ENCODE measurements at regions of chr10 and their contacts with region 1.

Region 1: DNA sequence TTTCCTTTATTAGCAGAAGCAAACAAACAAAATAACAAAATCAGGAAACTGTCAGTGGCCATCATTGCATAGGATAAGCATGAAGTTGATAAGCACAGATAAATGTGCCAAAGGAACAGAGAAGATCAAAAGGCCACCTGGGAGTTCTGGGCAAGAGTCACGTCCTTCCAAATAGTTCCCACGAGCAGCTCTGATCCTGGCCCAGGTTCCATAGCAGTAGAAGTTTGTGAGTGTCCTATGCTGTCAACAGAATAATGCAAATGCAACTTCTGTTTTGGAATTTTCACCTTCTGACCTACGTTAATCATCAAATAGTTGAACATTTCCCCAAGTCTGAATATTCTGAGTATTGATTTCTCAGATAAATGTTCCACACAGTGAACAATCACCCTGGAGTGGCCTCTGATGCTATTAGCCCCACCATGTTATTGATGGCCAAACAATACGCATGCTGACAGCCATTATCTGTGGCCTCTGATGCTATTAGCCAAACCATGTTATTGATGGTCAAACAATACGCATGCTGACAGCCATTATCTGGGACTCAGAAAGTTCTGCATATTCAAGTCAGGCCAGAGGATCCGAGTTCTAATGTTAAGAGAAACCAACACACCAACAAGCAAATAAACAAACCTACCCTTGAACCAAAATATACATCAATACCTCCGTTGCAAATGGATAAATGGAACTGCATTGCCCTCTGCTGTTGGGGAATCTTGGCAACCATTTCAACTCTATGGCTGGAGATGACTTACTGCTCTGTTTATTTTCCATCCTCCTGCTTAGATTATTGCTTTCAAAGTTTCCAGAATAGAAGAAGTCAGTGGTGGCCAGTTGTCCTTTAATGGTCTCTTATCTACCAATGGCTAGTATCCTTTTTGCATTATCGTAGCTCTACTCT is 63.3 kb downstream of the MRC1 start:
- DNase-seq: peak; percentile 57

Region 2: DNA sequence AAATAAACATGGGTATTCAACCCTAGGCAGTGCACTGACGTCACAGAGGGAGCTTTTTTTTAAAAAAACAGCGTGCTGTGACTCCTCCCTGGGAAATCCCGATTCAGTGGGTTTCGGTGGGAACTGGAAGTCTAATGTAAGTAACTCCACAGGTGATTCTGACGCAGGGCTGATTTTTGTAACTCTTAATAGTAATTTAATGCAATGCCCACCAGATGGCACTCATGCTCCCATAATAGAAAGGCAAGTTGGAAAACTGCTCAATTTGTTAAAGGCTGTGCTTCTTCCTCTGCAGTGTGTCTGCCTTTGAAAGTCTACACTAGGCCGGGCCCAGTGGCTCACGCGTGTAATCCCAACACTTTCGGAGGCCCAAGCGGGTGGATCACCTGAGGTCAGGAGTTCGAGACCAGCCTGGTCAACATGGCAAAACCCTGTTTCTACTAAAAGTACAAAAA is 1044.3 kb before region 1 on chr10:
- in situ Hi-C with region 1: loop called (anchors 25 kb)
- DNase-seq: peak; percentile 82

Region 3: DNA sequence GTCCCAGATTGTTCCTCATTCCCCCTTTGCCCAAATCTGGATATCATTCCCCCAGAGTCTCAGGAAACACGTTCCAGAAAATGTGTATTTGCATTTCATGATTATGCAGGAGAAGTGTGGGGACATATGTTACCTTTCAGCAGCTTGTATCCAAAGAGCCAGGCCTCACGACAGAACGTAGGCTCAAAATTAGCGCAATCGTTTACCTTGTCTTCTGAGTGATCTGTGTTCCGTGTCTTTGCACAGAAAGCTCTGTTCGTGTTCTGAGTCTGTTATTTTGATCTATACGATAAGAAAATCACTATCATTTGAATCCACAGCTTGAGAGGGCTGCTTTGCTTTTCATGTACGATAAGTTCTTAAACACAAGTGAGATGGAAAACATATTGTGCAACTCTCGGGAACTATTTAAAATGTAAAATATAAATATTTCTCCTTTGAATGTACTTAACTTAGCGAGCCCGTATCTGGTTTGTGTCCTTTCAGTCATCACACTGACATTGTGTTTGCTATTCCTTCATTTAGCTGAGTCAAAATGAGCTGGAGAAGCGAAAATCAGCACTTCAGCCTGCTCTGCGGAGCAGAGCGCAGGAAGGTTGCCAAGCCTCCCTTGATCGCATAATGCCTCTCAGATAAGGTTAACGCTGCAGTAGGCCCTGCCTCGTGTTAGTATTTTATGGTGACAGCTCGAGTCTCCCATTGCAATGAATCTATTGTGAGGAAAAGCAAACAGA is 187.6 kb after region 1 on chr10:
- in situ Hi-C with region 1: no loop called
- DNase-seq: no peak